ENCODE measurements at regions of chr9 and their contacts with region 1.

Region 1: GRCh38 chr9:94213511-94214124 is 45.5 kb upstream of the ZNF169 start:
- DNase-seq: peak; percentile 84
- CTCF ChIP-seq: peak; percentile 74

Region 2: DNA sequence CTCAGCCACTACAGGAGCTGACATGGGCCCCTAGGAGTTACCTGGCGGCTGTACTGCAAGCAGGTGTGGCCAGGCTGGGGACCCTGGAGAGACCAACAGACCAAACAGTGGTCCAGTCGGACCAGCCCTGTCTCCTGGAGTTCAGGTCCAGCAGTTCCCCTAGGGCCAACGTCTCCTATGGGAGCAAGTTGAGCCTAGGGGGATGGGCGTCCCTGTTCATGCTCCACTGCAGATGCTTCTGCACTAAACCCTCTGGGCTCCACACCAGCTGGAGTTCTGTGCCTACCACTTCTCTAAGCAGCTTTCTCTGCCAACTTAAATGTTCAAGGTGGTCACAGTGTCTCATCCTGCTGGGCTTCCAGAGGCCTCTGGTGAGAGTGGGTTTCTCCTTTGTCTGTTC is 1768.8 kb before region 1 on chr9:
- CTCF ChIA-PET with region 1: no interaction called
- POLR2A ChIA-PET with region 1: no interaction called
- DNase-seq: no peak
- CTCF ChIP-seq: no peak

Region 3: GRCh38 chr9:94014065-94014654 is 199.5 kb before region 1 on chr9:
- CTCF ChIA-PET with region 1: interaction called, 133 read pairs
- POLR2A ChIA-PET with region 1: no interaction called
- DNase-seq: peak; percentile 37
- CTCF ChIP-seq: peak; percentile 65

Region 4: DNA sequence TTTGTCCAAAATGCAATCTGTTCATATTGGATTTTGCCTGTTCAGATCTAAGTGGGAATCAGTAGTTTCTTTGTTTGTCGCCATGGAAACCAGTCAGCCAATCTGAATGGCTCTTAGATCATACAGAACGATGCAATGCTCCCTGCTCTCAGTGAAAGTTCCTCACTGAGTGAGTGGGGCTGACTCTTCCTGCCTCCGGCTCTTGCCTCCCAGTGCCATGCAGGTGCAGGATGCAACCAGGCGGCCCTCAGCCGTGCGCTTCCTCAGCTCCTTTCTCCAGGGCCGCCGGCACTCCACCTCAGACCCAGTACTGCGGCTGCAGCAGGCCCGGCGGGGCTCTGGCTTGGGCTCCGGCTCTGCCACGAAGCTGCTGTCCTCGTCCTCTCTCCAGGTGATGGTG is 129.3 kb before region 1 on chr9 and contains the start of gene PTPDC1:
- CTCF ChIA-PET with region 1: interaction called, 29 read pairs
- POLR2A ChIA-PET with region 1: no interaction called
- DNase-seq: no peak
- CTCF ChIP-seq: no peak

Region 5: GRCh38 chr9:94182532-94182931 is 31.1 kb before region 1 on chr9:
- CTCF ChIA-PET with region 1: interaction called, 12 read pairs
- POLR2A ChIA-PET with region 1: no interaction called
- DNase-seq: no peak
- CTCF ChIP-seq: no peak

Region 6: DNA sequence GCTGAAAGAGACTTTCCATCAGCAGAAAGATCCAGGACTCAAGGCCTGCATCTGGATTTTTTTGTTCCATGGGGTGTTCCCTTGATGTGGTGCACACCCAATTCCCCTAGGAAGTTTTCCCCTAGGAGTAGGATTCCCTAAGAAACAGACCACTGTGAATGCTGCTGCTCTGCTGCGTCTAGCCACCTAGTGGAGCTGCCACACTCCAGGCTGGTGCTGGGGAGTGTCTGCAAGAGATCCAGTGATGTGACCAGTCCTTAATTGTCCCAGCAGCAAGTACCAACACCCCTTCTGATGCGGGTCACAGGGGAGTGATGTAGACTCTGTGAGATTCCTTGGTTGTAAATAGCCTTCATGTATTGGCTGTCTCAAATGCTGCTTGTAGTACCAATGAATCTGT is 16.0 kb before region 1 on chr9:
- CTCF ChIA-PET with region 1: interaction called, 27 read pairs
- POLR2A ChIA-PET with region 1: no interaction called
- DNase-seq: no peak
- CTCF ChIP-seq: no peak

Measured in GM10248 (cell line).